ENCODE measurements at regions of chr11 and their contacts with region 1.

Region 1: GRCh38 chr11:65593518-65594298 is 1.9 kb downstream of the KCNK7 start:
- DNase-seq: peak; percentile 34
- H3K4me3 ChIP-seq: no peak overlapping the region
- H3K27ac ChIP-seq: no peak overlapping the region
- H3K4me1 ChIP-seq: peaks cover 7% of the 10 kb centered on the region
- H3K27me3 ChIP-seq: no peaks in the 10 kb centered on the region
- CTCF ChIP-seq: peak; percentile 61 to 76
- POLR2A ChIP-seq: no peak

Region 2: GRCh38 chr11:65366340-65366773 is 227.4 kb before region 1 on chr11:
- CTCF ChIA-PET with region 1: interaction called, 6 read pairs
- POLR2A ChIA-PET with region 1: no interaction called
- dilution Hi-C with region 1: no loop called
- intact Hi-C with region 1: loop called (anchors 5 kb)
- DNase-seq: peak; percentile 78
- H3K4me3 ChIP-seq: no peak overlapping the region
- H3K27ac ChIP-seq: no peak overlapping the region
- H3K4me1 ChIP-seq: peaks cover 7% of the 10 kb centered on the region
- H3K27me3 ChIP-seq: no peaks in the 10 kb centered on the region
- CTCF ChIP-seq: peak; percentile 49 to 66
- POLR2A ChIP-seq: no peak

Region 3: GRCh38 chr11:65606876-65607613 is 13.3 kb after region 1 on chr11:
- CTCF ChIA-PET with region 1: interaction called, 54 read pairs
- POLR2A ChIA-PET with region 1: no interaction called
- dilution Hi-C with region 1: no loop called
- intact Hi-C with region 1: loop called (anchors 1 kb)
- DNase-seq: peak; percentile 96
- H3K4me3 ChIP-seq: no peak overlapping the region
- H3K27ac ChIP-seq: no peak overlapping the region
- H3K4me1 ChIP-seq: peaks cover 41% of the 10 kb centered on the region
- H3K27me3 ChIP-seq: no peaks in the 10 kb centered on the region
- CTCF ChIP-seq: no peak
- POLR2A ChIP-seq: peak; percentile 68

Region 4: GRCh38 chr11:65615229-65615941 is 21.7 kb after region 1 on chr11 and contains the start of gene PCNX3:
- CTCF ChIA-PET with region 1: interaction called, 54 read pairs
- POLR2A ChIA-PET with region 1: no interaction called
- dilution Hi-C with region 1: no loop called
- intact Hi-C with region 1: no loop called
- DNase-seq: peak; percentile 100
- H3K4me3 ChIP-seq: peak within 1 kb of the TSS; percentile 81 to 90 (median 87)
- H3K27ac ChIP-seq: peak within 1 kb of the TSS; percentile 88
- H3K4me1 ChIP-seq: peaks cover 39% of the 10 kb centered on the region
- H3K27me3 ChIP-seq: no peaks in the 10 kb centered on the region
- CTCF ChIP-seq: no peak
- POLR2A ChIP-seq: peak; percentile 59
- total RNA-seq, gene PCNX3: 53.8 and 53.9 TPM in 2 replicates

Measured in endothelial cell of umbilical vein (primary cell).